ENCODE measurements at regions of chr7 and their contacts with region 1.

Region 1: GRCh38 chr7:102464577-102465280 is at the starts of genes ALKBH4 and LRWD1:
- DNase-seq: peak; percentile 85 to 97 (median 94)
- ATAC-seq: peak; percentile 93
- H3K4me3 ChIP-seq: peak within 1 kb of the TSS; percentile 99
- H3K4me3 Mint-ChIP-seq: peak within 1 kb of the TSS; percentile 92
- H3K27ac ChIP-seq: peak within 1 kb of the TSS; percentile 40 to 46
- H3K27ac Mint-ChIP-seq: peak within 1 kb of the TSS; percentile 75
- H3K4me1 ChIP-seq: peaks cover 52% of the 10 kb centered on the region
- H3K4me1 Mint-ChIP-seq: peaks cover 34% of the 10 kb centered on the region
- H3K27me3 ChIP-seq: no peaks in the 10 kb centered on the region
- H3K27me3 Mint-ChIP-seq: no peaks in the 10 kb centered on the region
- CTCF ChIP-seq: peak; percentile 29
- total RNA-seq, gene ALKBH4: 2.9 to 3.5 TPM
- total RNA-seq, gene LRWD1: 12.9 to 13.9 TPM

Region 2: GRCh38 chr7:101085162-101085987 is 1379.4 kb before region 1 on chr7 and contains the start of gene TRIM56:
- CTCF ChIA-PET with region 1: no interaction called
- POLR2A ChIA-PET with region 1: no interaction called
- intact Hi-C with region 1: loop called in 1 of 2 experiments (anchors 10 kb)
- DNase-seq: peak; percentile 52 to 88 (median 70)
- ATAC-seq: peak; percentile 90
- H3K4me3 ChIP-seq: peak within 1 kb of the TSS; percentile 99
- H3K4me3 Mint-ChIP-seq: peak within 1 kb of the TSS; percentile 100
- H3K27ac ChIP-seq: peak within 1 kb of the TSS; percentile 91 to 92
- H3K27ac Mint-ChIP-seq: peak within 1 kb of the TSS; percentile 96
- H3K4me1 ChIP-seq: peaks cover 53% of the 10 kb centered on the region
- H3K4me1 Mint-ChIP-seq: peaks cover 28% of the 10 kb centered on the region
- H3K27me3 ChIP-seq: no peaks in the 10 kb centered on the region
- H3K27me3 Mint-ChIP-seq: no peaks in the 10 kb centered on the region
- CTCF ChIP-seq: no peak
- total RNA-seq, gene TRIM56: 29.9 to 31.8 TPM

Region 3: DNA sequence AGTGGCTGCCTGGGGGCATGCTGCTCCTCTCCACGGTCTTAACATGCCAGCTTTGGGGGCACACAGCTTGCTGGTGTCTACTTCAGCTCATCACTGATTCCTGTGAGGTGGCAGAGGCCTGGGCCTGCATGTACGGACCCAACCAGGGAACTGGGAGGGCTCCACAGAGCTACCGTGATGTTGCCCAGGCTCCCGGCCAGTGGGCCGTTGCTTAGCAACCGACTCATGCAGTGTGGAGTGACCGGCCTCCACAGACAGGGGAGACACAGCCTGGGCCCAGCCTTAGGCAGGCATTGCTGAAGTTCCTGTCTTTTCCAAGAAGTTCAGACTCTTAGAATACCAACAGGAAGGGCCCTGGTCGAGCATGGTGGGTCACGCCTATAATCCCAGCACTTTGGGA is 203.9 kb before region 1 on chr7:
- CTCF ChIA-PET with region 1: no interaction called
- POLR2A ChIA-PET with region 1: no interaction called
- intact Hi-C with region 1: no loop called
- DNase-seq: no peak
- ATAC-seq: no peak
- H3K4me3 ChIP-seq: no peak overlapping the region
- H3K4me3 Mint-ChIP-seq: no peak overlapping the region
- H3K27ac ChIP-seq: no peak overlapping the region
- H3K27ac Mint-ChIP-seq: no peak overlapping the region
- H3K4me1 ChIP-seq: no peaks in the 10 kb centered on the region
- H3K4me1 Mint-ChIP-seq: no peaks in the 10 kb centered on the region
- H3K27me3 ChIP-seq: no peaks in the 10 kb centered on the region
- H3K27me3 Mint-ChIP-seq: no peaks in the 10 kb centered on the region
- CTCF ChIP-seq: no peak

Region 4: DNA sequence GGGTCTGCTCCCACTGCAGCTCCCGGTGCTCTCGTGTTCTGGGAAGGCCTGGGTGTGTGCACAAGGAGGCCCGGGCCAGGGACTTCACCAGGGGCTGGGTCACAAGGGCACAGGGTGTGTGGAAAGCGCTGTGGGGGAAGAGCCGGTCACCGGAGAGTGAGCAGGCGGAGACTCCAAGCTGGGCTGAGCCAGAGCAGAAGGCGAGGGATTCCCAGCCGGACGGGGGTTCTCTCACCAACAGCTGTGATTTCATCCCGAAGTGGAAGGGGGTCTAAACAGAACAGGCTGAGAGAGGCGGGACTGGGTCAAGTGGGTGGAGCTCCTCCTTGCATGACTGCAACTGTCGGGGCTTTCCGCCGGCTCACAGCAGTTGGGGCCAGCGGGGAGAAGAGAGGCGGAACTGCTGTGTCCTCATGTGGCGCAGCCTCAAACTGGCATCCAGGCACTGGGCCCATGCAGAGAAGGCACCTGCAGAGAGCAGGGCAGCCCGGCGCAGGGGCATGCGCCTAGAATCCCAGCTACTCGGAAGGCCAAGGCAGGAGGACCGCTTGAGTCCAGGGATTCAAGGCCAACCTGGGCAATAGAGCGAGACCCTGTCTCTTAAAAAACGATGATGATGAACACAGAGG is 39.0 kb before region 1 on chr7:
- CTCF ChIA-PET with region 1: no interaction called
- POLR2A ChIA-PET with region 1: interaction called, 25 read pairs
- intact Hi-C with region 1: loop called in 1 of 2 experiments (anchors 5 kb)
- DNase-seq: peak; percentile 74 to 96 (median 78)
- ATAC-seq: peak; percentile 75
- H3K4me3 ChIP-seq: peak overlapping the region; percentile 42
- H3K4me3 Mint-ChIP-seq: peak overlapping the region; percentile 86
- H3K27ac ChIP-seq: peak overlapping the region; percentile 95 to 99
- H3K27ac Mint-ChIP-seq: peak overlapping the region; percentile 100
- H3K4me1 ChIP-seq: peaks cover 82% of the 10 kb centered on the region
- H3K4me1 Mint-ChIP-seq: peaks cover 63% of the 10 kb centered on the region
- H3K27me3 ChIP-seq: no peaks in the 10 kb centered on the region
- H3K27me3 Mint-ChIP-seq: no peaks in the 10 kb centered on the region
- CTCF ChIP-seq: no peak

Region 5: DNA sequence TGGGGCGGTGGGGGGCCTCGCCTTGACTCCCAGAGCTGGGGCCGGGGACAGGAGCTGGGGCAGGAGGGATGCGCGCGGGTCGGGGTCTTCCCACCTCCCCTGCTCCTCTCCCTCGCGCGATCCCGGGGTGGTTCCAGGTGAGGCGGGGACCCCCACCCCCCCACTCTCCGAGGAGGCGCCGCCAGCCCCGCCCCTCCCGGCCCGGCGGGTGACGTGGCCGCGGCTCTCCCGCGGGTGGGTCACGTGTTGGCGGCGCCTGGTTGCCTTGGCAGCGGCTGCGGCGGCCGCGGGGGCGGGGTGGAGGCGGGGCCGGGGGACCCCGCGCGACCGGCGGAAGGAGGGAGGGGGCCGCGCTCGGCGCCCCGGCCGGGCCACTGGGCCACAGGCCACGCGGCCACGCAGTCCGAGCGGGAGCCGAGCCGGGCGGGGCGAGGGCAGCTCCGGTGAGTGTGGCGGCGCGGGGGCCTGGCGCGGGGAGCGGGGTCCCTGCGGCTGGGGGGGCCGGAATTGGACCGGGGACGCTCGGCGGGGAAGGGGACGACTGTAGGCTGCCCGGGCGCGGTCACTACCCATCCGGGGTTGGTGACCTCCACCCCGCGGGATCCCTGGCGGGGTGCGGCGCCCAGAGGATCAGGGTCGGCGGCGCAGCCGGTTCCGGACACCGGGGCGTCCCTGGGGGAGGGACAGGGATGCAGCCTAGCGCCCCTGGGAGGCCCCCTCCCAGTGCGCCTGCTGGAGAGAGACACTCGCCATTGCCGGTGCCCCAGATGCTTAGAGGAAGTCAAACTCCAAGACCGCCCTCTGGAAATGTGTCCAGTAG is 31.3 kb before region 1 on chr7 and contains the start of gene ORAI2:
- CTCF ChIA-PET with region 1: no interaction called
- POLR2A ChIA-PET with region 1: interaction called, 16 read pairs
- intact Hi-C with region 1: loop called (anchors 1 to 5 kb)
- DNase-seq: peak; percentile 71 to 93 (median 87)
- ATAC-seq: peak; percentile 56
- H3K4me3 ChIP-seq: peak within 1 kb of the TSS; percentile 79
- H3K4me3 Mint-ChIP-seq: peak within 1 kb of the TSS; percentile 94
- H3K27ac ChIP-seq: peak within 1 kb of the TSS; percentile 92 to 95
- H3K27ac Mint-ChIP-seq: peak within 1 kb of the TSS; percentile 100
- H3K4me1 ChIP-seq: peaks cover 68% of the 10 kb centered on the region
- H3K4me1 Mint-ChIP-seq: peaks cover 47% of the 10 kb centered on the region
- H3K27me3 ChIP-seq: no peaks in the 10 kb centered on the region
- H3K27me3 Mint-ChIP-seq: no peaks in the 10 kb centered on the region
- CTCF ChIP-seq: no peak
- total RNA-seq, gene ORAI2: 12.3 to 16.5 TPM

Measured in CD4-positive, alpha-beta T cell (primary cell).